Caco-2 (cell line): ENCODE measurements at regions of chr5 and their contacts with region 1.

Region 1: GRCh38 chr5:115841382-115842088 is at the starts of genes AP3S1 and ATG12:
- DNase-seq: peak; percentile 91 to 94
- H3K4me3 ChIP-seq: peak within 1 kb of the TSS; percentile 61
- H3K4me3 Mint-ChIP-seq: peak within 1 kb of the TSS; percentile 95
- H3K27ac Mint-ChIP-seq: peak within 1 kb of the TSS; percentile 97
- H3K4me1 ChIP-seq: peaks cover 41% of the 10 kb centered on the region
- H3K4me1 Mint-ChIP-seq: peaks cover 20% of the 10 kb centered on the region
- H3K27me3 ChIP-seq: no peaks in the 10 kb centered on the region
- H3K27me3 Mint-ChIP-seq: no peaks in the 10 kb centered on the region
- CTCF ChIP-seq: no peak
- total RNA-seq, gene AP3S1: 104 and 106 TPM in 2 replicates
- total RNA-seq, gene ATG12: 46.8 and 47.5 TPM in 2 replicates

Region 2: DNA sequence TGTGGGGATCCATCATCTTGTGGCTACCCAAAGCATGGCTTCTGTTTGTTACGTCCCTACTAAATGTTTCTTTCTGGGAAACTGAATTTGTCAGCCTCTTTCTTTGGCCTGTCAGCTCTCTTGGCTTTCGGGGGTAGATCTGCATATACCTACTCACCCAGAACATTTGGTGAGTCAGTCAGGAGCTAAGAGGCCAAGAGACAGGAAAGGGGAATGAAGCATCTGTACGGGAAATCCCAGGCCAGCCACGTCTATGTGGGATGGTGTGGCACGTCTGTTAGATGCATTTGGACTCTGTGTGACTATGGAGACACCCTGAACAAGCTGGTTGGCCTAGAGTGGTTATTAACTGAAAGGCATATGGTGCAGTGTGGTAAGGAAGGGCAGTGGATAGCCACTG is 83.2 kb before region 1 on chr5:
- CTCF ChIA-PET with region 1: no interaction called
- POLR2A ChIA-PET with region 1: no interaction called
- intact Hi-C with region 1: no loop called
- DNase-seq: no peak
- H3K4me3 ChIP-seq: no peak overlapping the region
- H3K4me3 Mint-ChIP-seq: no peak overlapping the region
- H3K27ac Mint-ChIP-seq: no peak overlapping the region
- H3K4me1 ChIP-seq: no peaks in the 10 kb centered on the region
- H3K4me1 Mint-ChIP-seq: no peaks in the 10 kb centered on the region
- H3K27me3 ChIP-seq: no peaks in the 10 kb centered on the region
- H3K27me3 Mint-ChIP-seq: peaks cover 4% of the 10 kb centered on the region
- CTCF ChIP-seq: no peak

Region 3: DNA sequence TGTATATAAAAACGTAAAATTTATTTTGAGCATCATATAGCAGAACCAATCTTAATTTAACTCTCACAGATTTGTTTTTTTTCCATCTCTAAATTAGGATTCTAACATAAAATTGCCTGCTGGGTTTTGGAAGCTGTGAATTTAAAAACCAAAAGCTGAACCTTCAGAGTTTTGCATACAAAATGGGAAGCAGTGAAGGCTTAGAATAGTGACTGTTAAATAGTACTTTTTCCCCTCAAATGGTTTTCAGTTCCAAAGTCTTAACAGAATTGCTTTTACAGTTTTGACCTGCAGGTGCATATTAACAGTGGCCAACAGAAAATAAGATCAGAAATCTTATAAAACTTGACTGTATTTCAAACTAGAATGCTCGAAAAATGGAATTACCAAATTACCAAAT is 65.6 kb after region 1 on chr5:
- CTCF ChIA-PET with region 1: no interaction called
- POLR2A ChIA-PET with region 1: no interaction called
- intact Hi-C with region 1: loop called (anchors 2 kb)
- DNase-seq: no peak
- H3K4me3 ChIP-seq: no peak overlapping the region
- H3K4me3 Mint-ChIP-seq: no peak overlapping the region
- H3K27ac Mint-ChIP-seq: no peak overlapping the region
- H3K4me1 ChIP-seq: no peaks in the 10 kb centered on the region
- H3K4me1 Mint-ChIP-seq: no peaks in the 10 kb centered on the region
- H3K27me3 ChIP-seq: no peaks in the 10 kb centered on the region
- H3K27me3 Mint-ChIP-seq: no peaks in the 10 kb centered on the region
- CTCF ChIP-seq: no peak

Region 4: GRCh38 chr5:116084871-116085715 is 243.6 kb after region 1 on chr5 and contains the start of gene COMMD10:
- CTCF ChIA-PET with region 1: no interaction called
- POLR2A ChIA-PET with region 1: no interaction called
- intact Hi-C with region 1: loop called (anchors 5 kb)
- DNase-seq: peak; percentile 77 to 82
- H3K4me3 ChIP-seq: peak within 1 kb of the TSS; percentile 91
- H3K4me3 Mint-ChIP-seq: peak within 1 kb of the TSS; percentile 79
- H3K27ac Mint-ChIP-seq: peak within 1 kb of the TSS; percentile 87
- H3K4me1 ChIP-seq: peaks cover 10% of the 10 kb centered on the region; the same call in 1 of the 2 replicates
- H3K4me1 Mint-ChIP-seq: peaks cover 14% of the 10 kb centered on the region
- H3K27me3 ChIP-seq: no peaks in the 10 kb centered on the region
- H3K27me3 Mint-ChIP-seq: no peaks in the 10 kb centered on the region
- CTCF ChIP-seq: no peak
- total RNA-seq, gene COMMD10: 26.4 and 30.4 TPM in 2 replicates